ENCODE measurements at regions of chr12 and their contacts with region 1.

Region 1: DNA sequence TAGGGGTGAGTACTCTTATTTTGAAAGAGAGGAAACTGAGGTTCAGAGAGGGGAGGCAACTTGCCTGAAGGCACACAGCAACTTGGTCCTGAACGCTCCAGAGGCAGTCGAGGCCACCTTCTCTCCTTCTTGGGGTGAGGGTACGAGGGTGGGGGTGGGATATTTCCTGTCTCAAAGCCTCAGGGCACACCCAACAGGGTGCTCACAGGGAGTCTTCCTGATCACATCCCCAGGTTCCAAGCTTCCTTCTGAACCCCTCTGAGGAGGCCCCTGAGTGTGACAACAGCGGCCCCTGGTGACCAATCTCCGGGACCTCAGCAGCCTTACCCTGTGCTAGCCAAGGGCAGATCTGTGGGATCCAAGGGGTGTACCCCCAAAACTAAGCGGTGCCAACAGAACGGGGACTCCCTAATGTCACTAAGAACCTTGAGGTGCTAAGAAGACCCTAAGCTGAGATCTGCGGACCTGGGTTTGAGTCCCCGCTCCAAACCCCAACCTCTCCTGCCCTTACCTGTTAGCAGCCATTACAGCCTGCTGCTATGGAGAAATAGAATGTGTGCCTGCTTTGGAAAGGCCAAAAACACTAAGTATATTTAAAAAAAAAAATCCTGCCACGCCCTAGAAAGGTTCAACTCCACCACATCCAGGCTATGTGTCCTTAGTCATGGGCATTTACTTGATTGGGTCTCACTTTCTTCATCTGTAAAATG is 57.9 kb downstream of the TRPV4 start:
- DNase-seq: peak; percentile 84
- ATAC-seq: peak; percentile 84

Region 2: GRCh38 chr12:109428037-109428629 is 347.2 kb before region 1 on chr12:
- intact Hi-C with region 1: loop called (anchors 10 kb)
- DNase-seq: peak; percentile 90
- ATAC-seq: peak; percentile 93

Region 3: DNA sequence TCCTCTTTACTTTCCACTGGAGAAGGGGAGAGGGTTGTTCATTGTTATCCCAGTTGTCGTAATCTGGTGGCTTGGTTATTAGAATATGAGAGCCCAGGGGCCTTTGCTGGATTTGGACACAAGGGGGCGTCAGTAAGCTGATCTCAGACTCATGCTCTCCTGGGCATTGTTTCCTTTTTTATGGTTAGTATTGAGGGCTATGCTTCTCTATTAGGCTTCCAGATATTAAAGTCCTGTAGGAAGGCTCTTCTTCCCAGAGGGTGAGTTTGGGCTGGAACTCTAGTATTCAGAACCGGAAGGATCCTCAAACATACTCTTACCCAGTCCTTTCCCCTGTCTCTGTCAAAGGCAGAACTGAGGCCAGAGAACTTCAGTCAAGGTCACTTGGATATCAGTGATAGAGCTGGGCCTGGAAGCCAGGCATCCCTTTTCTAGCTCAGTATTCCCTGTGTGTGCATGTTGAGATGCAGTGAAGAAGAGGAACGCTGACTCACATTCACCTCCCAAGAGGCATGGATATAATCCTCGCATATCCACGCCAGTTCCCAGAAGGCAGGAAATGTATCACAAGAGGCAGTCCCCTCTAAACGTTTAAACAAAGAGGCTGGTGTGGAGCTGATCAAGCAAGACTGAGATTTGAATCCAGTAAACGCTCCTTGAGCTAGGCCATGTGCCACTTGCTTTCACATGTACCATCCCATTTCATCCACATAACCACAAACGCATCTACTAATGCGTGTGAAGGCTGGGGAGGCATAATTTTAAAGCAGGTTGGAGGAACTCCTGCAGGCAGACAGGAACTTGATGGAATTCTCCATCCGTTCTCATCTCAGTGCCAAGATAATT is 256.3 kb before region 1 on chr12:
- intact Hi-C with region 1: loop called (anchors 5 kb)
- DNase-seq: peak; percentile 71
- ATAC-seq: peak; percentile 57

Region 4: DNA sequence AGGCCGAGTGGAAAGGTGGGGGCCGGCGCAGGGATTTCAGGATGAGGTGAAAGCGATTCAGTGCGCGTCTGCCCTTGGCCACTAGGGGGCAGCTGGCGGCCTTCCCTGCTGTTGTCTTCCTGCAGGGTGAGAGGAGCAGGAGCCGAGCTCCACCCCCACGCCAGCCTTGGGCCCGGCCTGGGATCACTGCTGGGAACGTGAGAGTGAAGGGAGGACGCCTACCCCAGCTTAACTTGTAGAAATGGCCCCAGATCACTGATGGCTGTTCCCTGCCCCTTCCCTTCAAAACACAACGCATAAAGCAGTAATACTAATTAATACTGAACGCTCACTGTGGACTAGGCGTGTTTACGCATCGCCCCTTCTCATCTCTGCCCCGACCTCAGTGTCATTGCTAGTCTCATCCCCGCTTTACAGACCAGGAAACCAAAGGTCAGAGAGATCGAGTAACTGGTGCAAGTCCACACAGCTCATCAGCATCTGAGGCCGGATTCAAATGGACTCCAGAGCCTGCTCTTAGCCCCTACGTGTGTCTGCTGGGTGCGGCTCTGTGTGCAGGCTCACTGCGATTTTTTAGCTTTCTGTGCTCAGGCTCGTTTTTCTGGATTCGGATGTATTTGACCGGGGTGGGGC is 177.4 kb before region 1 on chr12:
- intact Hi-C with region 1: loop called (anchors 5 kb)
- DNase-seq: peak; percentile 92
- ATAC-seq: peak; percentile 86

Measured in left ventricle myocardium superior (tissue), 1 donor.